AG04450 (cell line): ENCODE measurements at regions of chr9 and their contacts with region 1.

Region 1: GRCh38 chr9:75880618-75881017 is 9.9 kb upstream of the PCSK5 start:
- DNase-seq: no peak
- H3K4me3 ChIP-seq: no peak overlapping the region
- H3K27ac ChIP-seq: no peak overlapping the region
- H3K27me3 ChIP-seq: no peaks in the 10 kb centered on the region
- CTCF ChIP-seq: no peak

Region 2: GRCh38 chr9:75833778-75834177 is 46.8 kb before region 1 on chr9:
- CTCF ChIA-PET with region 1: interaction called, 15 read pairs
- POLR2A ChIA-PET with region 1: no interaction called
- DNase-seq: no peak
- H3K4me3 ChIP-seq: no peak overlapping the region
- H3K27ac ChIP-seq: no peak overlapping the region
- H3K27me3 ChIP-seq: no peaks in the 10 kb centered on the region
- CTCF ChIP-seq: no peak

Region 3: DNA sequence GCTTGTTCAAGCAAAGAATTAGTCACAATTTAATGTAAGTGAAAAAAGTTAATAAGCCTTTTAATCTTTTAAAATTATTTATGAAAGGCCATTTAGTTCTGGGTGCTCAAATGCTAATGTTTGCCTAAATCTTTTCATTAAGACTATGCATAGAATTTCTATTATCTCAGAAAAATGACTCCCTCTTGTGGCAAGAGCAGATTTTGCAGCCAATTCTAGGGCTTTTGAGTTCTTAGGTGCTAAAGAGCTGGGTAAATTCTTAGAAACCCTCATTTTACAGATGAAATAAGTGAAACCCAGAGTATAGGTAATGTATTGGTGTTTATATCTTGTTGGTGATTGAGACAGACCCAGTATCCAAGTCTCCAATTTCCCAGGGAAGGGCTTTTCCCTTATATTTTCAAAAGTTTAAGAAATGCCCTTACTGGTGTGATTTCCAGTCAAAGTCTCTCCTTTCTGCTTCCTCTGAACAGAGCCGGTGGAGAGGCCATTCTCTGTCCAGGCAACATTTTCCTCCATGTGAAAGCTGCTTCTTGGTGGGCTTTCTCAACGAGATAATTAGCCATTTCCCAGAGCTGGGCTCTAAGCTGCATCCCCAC is 14.2 kb before region 1 on chr9:
- CTCF ChIA-PET with region 1: interaction called, 11 read pairs
- POLR2A ChIA-PET with region 1: no interaction called
- DNase-seq: no peak
- H3K4me3 ChIP-seq: no peak overlapping the region
- H3K27ac ChIP-seq: no peak overlapping the region
- H3K27me3 ChIP-seq: no peaks in the 10 kb centered on the region
- CTCF ChIP-seq: peak; percentile 75